ENCODE measurements at regions of chr17 and their contacts with region 1.

Region 1: GRCh38 chr17:40909351-40909750 is 24.3 kb upstream of the KRT20 start:
- DNase-seq: peak; percentile 98
- ATAC-seq: peak; percentile 93
- H3K4me3 ChIP-seq: no peak overlapping the region
- H3K27ac ChIP-seq: no peak overlapping the region
- H3K4me1 ChIP-seq: peaks cover 10% of the 10 kb centered on the region
- H3K27me3 ChIP-seq: no peaks in the 10 kb centered on the region
- CTCF ChIP-seq: peak; percentile 96
- POLR2A ChIP-seq: 0 out of 2 replicates have a peak, but pooled peaks have one; percentile 53
- RAD21 ChIP-seq: peak; percentile 99

Region 2: DNA sequence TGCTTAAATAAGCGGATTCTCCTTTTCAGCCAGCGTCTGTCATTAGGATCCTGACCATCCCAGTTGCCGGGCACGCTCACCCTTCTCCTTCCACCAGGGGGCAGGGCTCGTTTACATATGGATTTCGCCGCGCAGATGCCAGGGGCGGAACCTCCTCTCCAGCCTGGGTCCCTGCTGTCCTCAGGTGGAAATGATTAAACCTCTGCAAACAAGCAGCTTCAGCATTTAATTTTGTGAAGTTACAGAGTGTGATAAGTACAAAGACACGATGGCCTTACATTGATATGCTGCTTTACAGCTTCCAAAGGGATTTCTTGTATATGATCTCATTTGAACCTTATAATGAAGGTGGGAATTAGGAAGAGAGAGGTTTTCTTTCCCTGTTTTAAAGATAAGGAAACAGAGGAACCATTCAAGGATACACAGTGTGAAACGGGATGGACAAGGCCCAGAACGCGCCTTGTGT is 105.7 kb before region 1 on chr17:
- CTCF ChIA-PET with region 1: no interaction called
- POLR2A ChIA-PET with region 1: no interaction called
- dilution Hi-C with region 1: no loop called
- in situ Hi-C with region 1: loop called (anchors 10 kb)
- intact Hi-C with region 1: loop called (anchors 2 kb)
- DNase-seq: peak; percentile 66
- ATAC-seq: peak; percentile 100
- H3K4me3 ChIP-seq: no peak overlapping the region
- H3K27ac ChIP-seq: no peak overlapping the region
- H3K4me1 ChIP-seq: no peaks in the 10 kb centered on the region
- H3K27me3 ChIP-seq: peaks cover 25% of the 10 kb centered on the region
- CTCF ChIP-seq: peak; percentile 92
- POLR2A ChIP-seq: peak; percentile 42; the same call in 1 of the 2 replicates
- RAD21 ChIP-seq: peak; percentile 95

Region 3: DNA sequence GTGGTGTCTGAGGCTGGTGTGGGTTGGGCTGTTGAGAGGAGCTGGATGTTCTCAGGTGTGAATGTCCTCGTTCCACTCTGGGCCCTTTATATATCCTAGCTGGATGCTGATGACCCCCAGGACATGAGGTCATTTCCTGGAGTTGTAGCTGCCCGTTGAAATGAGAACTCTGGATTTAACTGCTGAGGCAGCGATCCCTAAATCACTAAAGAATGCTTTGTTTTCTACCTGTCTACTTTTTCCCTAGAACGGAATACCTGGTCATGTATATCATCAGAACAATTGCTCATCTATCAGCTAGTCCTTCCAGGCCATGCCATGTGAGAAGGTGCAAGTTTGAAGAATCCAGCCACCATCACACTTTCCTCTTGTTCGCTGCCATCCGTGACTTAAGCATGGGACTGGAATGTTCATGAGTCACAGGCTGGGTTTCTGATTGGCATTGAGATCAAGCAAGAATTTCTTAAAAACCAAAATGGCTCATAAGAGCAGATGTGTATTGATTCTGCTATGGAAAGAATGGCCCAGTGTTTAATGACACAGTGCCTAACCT is 150.8 kb after region 1 on chr17 and contains the start of gene KRTAP2-3:
- CTCF ChIA-PET with region 1: no interaction called
- POLR2A ChIA-PET with region 1: interaction called, 12 read pairs
- dilution Hi-C with region 1: no loop called
- in situ Hi-C with region 1: no loop called
- intact Hi-C with region 1: loop called (anchors 2 kb)
- DNase-seq: peak; percentile 97
- ATAC-seq: peak; percentile 44
- H3K4me3 ChIP-seq: no peak within 1 kb of the TSS
- H3K27ac ChIP-seq: peak within 1 kb of the TSS; percentile 94
- H3K4me1 ChIP-seq: peaks cover 16% of the 10 kb centered on the region
- H3K27me3 ChIP-seq: no peaks in the 10 kb centered on the region
- CTCF ChIP-seq: no peak
- POLR2A ChIP-seq: no peak
- RAD21 ChIP-seq: no peak
- total RNA-seq, gene KRTAP2-3: 1.4 TPM in 2 replicates

Region 4: DNA sequence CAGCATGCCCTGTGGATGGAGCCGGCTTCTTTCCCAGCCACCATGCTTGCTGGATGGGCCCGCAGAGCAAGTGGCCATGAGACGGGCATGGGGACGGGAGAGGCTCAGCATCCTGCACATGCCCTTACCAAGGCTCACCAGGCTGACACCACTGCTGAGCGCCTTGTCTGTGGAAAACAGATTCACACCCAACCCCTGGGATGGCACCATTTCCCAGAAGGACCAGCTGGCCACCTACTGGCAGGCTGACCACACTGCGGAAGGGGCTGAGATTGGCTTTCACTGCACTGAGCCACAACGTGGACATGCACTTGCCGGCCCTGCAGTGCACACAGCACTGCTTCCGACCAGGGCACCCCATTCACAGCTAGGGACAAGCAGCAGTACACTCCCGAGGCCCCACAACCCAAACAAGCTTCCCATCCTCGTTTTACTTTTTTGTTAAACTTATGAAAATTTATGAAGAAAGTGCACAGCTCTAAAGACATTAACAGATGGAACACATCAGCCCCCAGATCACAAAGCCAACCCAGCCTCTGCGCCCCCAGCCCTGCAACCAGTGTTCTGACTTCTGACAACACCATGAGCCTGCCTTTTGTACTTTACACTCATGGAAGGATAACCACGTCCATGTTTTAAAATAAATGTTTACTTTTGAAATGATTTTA is 420.1 kb after region 1 on chr17:
- CTCF ChIA-PET with region 1: interaction called, 4 read pairs
- POLR2A ChIA-PET with region 1: no interaction called
- dilution Hi-C with region 1: no loop called
- in situ Hi-C with region 1: loop called (anchors 5 kb)
- intact Hi-C with region 1: loop called (anchors 1 kb)
- DNase-seq: peak; percentile 56
- ATAC-seq: peak; percentile 96
- H3K4me3 ChIP-seq: no peak overlapping the region
- H3K27ac ChIP-seq: no peak overlapping the region
- H3K4me1 ChIP-seq: no peaks in the 10 kb centered on the region
- H3K27me3 ChIP-seq: no peaks in the 10 kb centered on the region
- CTCF ChIP-seq: peak; percentile 79
- POLR2A ChIP-seq: no peak
- RAD21 ChIP-seq: peak; percentile 82

Region 5: GRCh38 chr17:41648411-41649195 is 739.3 kb after region 1 on chr17:
- CTCF ChIA-PET with region 1: no interaction called
- POLR2A ChIA-PET with region 1: no interaction called
- dilution Hi-C with region 1: no loop called
- in situ Hi-C with region 1: no loop called
- intact Hi-C with region 1: loop called (anchors 1 kb)
- DNase-seq: peak; percentile 77
- ATAC-seq: peak; percentile 92
- H3K4me3 ChIP-seq: 0 out of 2 replicates have a peak overlapping the region, but pooled peaks have one; percentile 9
- H3K27ac ChIP-seq: peak overlapping the region; percentile 79
- H3K4me1 ChIP-seq: peaks cover 14% of the 10 kb centered on the region
- H3K27me3 ChIP-seq: no peaks in the 10 kb centered on the region; the same call in 1 of the 2 replicates
- CTCF ChIP-seq: peak; percentile 84
- POLR2A ChIP-seq: no peak
- RAD21 ChIP-seq: peak; percentile 57